Endothelial cell of umbilical vein (primary cell): ENCODE measurements at regions of chr17 and their contacts with region 1.

Region 1: DNA sequence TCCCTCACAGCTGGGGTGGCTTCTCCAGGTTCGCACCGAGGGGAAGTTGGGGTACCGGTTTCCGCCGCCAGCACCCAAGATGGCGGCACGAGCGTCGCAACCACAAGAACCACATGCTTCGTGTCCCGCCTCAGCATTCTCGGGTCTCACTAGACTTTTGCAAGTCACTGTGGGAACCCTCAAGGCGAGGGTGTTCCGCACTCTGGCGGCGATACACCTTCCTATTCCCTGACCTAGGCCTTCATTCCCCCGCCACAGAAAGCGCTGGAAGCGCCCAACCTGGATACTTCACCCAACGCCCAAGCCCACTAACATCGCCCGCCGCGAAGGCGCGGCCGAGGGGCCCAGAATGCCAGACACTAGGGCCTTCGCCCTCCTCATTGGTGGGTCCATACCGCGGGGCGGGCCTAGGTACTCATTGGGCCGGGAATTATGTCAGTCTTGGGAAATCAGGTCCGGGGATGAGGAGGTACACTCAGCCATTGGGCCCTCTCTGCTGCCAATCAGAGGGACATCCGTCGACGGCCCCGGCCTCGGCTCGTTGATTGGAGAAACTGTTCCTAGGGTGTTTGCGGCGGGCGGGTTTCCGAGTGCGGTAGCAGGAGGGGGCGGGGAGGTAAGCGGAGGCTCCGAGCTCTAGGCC is at the start of gene NFE2L1:
- DNase-seq: peak; percentile 100
- H3K4me3 ChIP-seq: peak within 1 kb of the TSS; percentile 64 to 91 (median 71)
- H3K27ac ChIP-seq: peak within 1 kb of the TSS; percentile 72
- H3K4me1 ChIP-seq: peaks cover 40% of the 10 kb centered on the region
- H3K27me3 ChIP-seq: no peaks in the 10 kb centered on the region
- CTCF ChIP-seq: no peak
- POLR2A ChIP-seq: peak; percentile 71
- total RNA-seq, gene NFE2L1: 204 and 236 TPM in 2 replicates

Region 2: GRCh38 chr17:48037036-48037837 is 10.6 kb before region 1 on chr17 and contains the start of gene COPZ2:
- CTCF ChIA-PET with region 1: interaction called, 12 read pairs
- POLR2A ChIA-PET with region 1: interaction called, 4 read pairs
- dilution Hi-C with region 1: no loop called
- intact Hi-C with region 1: loop called (anchors 1 kb)
- DNase-seq: peak; percentile 51
- H3K4me3 ChIP-seq: peak within 1 kb of the TSS; percentile 52 to 60 (median 57)
- H3K27ac ChIP-seq: peak within 1 kb of the TSS; percentile 4
- H3K4me1 ChIP-seq: peaks cover 7% of the 10 kb centered on the region
- H3K27me3 ChIP-seq: no peaks in the 10 kb centered on the region
- CTCF ChIP-seq: peak; percentile 48 to 72
- POLR2A ChIP-seq: no peak
- total RNA-seq, gene COPZ2: 12.5 and 16.3 TPM in 2 replicates

Region 3: DNA sequence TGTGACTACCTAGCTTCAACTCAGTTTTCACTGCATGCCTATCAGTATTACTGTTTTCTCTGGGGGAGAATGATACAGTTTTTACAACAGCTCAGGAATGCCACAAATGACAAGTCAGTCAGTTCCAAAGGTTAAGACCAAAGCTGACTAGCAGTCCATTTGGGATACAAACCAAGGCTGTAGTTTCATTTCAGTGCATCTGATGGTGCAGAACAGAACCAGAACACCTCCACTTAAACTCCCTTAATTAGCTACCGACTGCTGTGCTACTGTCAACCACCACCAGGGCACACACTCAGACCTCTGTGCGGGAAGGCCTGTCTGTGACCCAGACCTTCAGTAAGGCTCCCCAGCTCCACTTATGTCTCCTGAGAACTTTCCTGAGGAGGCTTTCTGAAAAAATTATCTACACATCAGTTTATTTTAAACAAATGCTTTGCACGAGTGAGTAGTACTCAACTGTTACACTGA is 20.7 kb after region 1 on chr17:
- CTCF ChIA-PET with region 1: interaction called, 23 read pairs
- POLR2A ChIA-PET with region 1: interaction called, 5 read pairs
- dilution Hi-C with region 1: no loop called
- intact Hi-C with region 1: loop called (anchors 2 kb)
- DNase-seq: no peak
- H3K4me3 ChIP-seq: no peak overlapping the region
- H3K27ac ChIP-seq: no peak overlapping the region
- H3K4me1 ChIP-seq: peaks cover 14% of the 10 kb centered on the region
- H3K27me3 ChIP-seq: no peaks in the 10 kb centered on the region
- CTCF ChIP-seq: peak; percentile 34 to 37
- POLR2A ChIP-seq: no peak

Region 4: GRCh38 chr17:48074315-48075081 is 26.6 kb after region 1 on chr17:
- CTCF ChIA-PET with region 1: interaction called, 24 read pairs
- POLR2A ChIA-PET with region 1: interaction called, 5 read pairs
- dilution Hi-C with region 1: no loop called
- intact Hi-C with region 1: loop called (anchors 1 kb)
- DNase-seq: peak; percentile 88
- H3K4me3 ChIP-seq: no peak overlapping the region
- H3K27ac ChIP-seq: no peak overlapping the region
- H3K4me1 ChIP-seq: no peaks in the 10 kb centered on the region
- H3K27me3 ChIP-seq: no peaks in the 10 kb centered on the region
- CTCF ChIP-seq: peak; percentile 63 to 69
- POLR2A ChIP-seq: no peak

Region 5: GRCh38 chr17:48084932-48085444 is 37.1 kb after region 1 on chr17:
- CTCF ChIA-PET with region 1: interaction called, 24 read pairs
- POLR2A ChIA-PET with region 1: no interaction called
- dilution Hi-C with region 1: no loop called
- intact Hi-C with region 1: no loop called
- DNase-seq: no peak
- H3K4me3 ChIP-seq: no peak overlapping the region
- H3K27ac ChIP-seq: no peak overlapping the region
- H3K4me1 ChIP-seq: peaks cover 4% of the 10 kb centered on the region
- H3K27me3 ChIP-seq: no peaks in the 10 kb centered on the region
- CTCF ChIP-seq: no peak
- POLR2A ChIP-seq: no peak

Region 6: GRCh38 chr17:48101012-48101720 is 53.3 kb after region 1 on chr17 and contains the start of gene CBX1:
- CTCF ChIA-PET with region 1: interaction called, 3 read pairs
- POLR2A ChIA-PET with region 1: interaction called, 9 read pairs
- dilution Hi-C with region 1: no loop called
- intact Hi-C with region 1: loop called (anchors 2 kb)
- DNase-seq: peak; percentile 96
- H3K4me3 ChIP-seq: peak within 1 kb of the TSS; percentile 60 to 91 (median 82)
- H3K27ac ChIP-seq: peak within 1 kb of the TSS; percentile 58
- H3K4me1 ChIP-seq: peaks cover 8% of the 10 kb centered on the region
- H3K27me3 ChIP-seq: no peaks in the 10 kb centered on the region
- CTCF ChIP-seq: no peak
- POLR2A ChIP-seq: peak; percentile 50
- total RNA-seq, gene CBX1: 95.2 and 102 TPM in 2 replicates

Region 7: GRCh38 chr17:48241131-48241591 is 193.3 kb after region 1 on chr17:
- CTCF ChIA-PET with region 1: no interaction called
- POLR2A ChIA-PET with region 1: interaction called, 9 read pairs
- dilution Hi-C with region 1: no loop called
- intact Hi-C with region 1: loop called (anchors 5 kb)
- DNase-seq: peak; percentile 73
- H3K4me3 ChIP-seq: no peak overlapping the region
- H3K27ac ChIP-seq: peak overlapping the region; percentile 90
- H3K4me1 ChIP-seq: peaks cover 92% of the 10 kb centered on the region
- H3K27me3 ChIP-seq: no peaks in the 10 kb centered on the region
- CTCF ChIP-seq: no peak
- POLR2A ChIP-seq: peak; percentile 14